Breast epithelium (tissue), 4 donors: ENCODE measurements at regions of chr2 and their contacts with region 1.

Region 1: GRCh38 chr2:10043906-10044601 is 704 bp downstream of the KLF11 start:
- DNase-seq: peak; percentile 97 to 98
- H3K4me3 ChIP-seq: peak overlapping the region; percentile 57 to 94 (median 67)
- H3K27ac ChIP-seq: peak overlapping the region; percentile 95 to 100
- H3K4me1 ChIP-seq: no peaks in the 10 kb centered on the region
- H3K27me3 ChIP-seq: no peaks in the 10 kb centered on the region
- CTCF ChIP-seq: no peak
- POLR2A ChIP-seq: peak; percentile 39

Region 2: DNA sequence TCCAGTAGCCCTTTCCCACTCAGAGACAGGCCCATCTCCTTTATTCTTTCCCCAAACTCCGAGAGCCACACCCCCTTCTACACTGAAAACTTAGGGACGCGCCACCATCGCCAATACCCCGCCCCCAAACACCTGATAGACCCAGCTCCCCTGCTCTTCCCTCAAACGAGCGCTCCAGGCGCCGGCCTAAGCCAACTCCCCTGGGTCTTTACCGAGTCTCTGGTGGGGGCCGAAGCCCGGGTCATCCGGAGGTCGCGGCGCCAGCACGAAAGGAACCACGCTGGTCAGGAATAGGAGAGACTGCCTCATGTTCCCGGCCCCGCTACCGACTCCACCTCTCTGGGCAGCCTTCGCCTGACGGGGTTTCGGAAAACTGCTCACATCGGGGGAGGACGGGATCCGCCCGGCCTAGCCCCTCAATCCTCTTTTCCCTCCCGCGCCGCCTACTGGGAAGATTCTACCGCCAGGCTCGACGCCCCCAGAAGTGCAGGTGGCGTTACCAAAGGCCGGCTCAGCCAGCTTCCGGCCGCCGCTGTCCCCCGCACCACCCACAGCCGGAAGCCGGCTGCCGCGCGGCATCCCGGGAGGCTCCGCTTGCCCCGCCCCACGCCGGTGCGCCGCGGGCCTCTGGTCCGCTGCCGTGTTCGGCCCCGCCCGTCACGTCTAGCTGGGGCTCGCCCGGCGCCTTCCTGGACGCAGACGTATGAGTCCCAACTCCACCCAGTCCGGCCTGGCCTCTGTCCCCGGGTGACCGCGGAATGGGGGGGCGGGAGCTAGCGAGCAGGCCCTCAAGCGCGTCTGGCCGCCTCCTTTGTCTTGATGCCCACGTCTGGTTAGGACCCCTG is 488.5 kb before region 1 on chr2 and contains the start of gene ADAM17:
- intact Hi-C with region 1: loop called (anchors 10 kb)
- DNase-seq: peak; percentile 95 to 96
- H3K4me3 ChIP-seq: peak within 1 kb of the TSS; percentile 74 to 98 (median 88)
- H3K27ac ChIP-seq: peak within 1 kb of the TSS; percentile 99 to 100
- H3K4me1 ChIP-seq: peaks cover 3 to 7% of the 10 kb centered on the region in 2 donors
- H3K27me3 ChIP-seq: no peaks in the 10 kb centered on the region
- CTCF ChIP-seq: peak in 2 of 3 donors; percentile 41 to 70
- POLR2A ChIP-seq: peak; percentile 79
- total RNA-seq, gene ADAM17: 32.2 to 65.9 (median 48.8) TPM

Region 3: DNA sequence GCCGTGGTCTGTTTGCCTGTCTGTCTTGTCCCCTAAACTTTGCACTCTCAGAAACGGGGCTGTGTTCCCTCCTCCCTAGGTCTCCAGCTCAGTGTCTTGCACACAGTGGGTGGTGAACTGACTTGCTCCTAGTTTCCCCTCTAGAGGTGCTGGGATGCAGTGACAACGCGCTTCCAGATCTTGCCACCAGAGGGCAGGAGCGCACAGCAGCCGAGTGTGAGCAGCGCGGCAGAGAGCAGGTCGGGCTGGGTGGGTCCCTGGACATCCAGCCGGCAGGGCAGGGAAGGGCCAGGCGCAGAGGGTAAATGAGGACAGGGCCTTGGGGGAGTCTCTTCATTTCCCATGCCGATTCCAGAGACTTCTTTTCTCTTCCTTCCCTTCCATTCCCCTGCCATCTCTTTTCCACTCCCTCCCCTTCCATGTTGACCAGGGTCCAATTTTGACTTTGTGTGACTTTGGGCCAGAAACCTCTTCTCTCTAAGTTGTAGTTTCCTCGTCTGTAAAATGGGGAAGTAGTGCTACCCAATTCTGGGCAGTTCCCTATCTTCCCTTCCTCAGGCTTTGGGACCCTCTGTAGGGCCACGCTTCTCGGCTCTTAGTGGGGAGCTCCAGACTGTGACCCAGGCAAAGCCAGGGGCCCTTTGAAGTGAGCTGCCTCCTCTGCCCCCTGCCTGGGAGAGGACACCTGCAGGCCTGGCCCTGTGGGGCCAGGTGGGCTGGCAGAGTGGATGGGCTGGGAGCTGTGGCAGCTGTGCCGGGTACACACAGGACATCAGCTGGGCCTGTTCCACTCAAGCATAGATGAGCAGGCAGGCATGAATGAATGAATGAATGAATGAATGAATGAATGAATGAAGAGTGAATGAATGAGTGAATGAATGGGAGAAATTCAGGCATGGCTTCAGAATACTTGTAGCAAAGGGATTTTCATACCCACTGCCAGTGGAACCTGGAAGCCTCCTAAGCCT is 244.1 kb before region 1 on chr2:
- intact Hi-C with region 1: loop called (anchors 10 kb)
- DNase-seq: peak; percentile 77 to 88
- H3K4me3 ChIP-seq: no peak overlapping the region
- H3K27ac ChIP-seq: peak overlapping the region; percentile 90 to 94
- H3K4me1 ChIP-seq: peaks cover 22 to 43% of the 10 kb centered on the region in 2 donors
- H3K27me3 ChIP-seq: no peaks in the 10 kb centered on the region
- CTCF ChIP-seq: peak; percentile 93 to 98 (median 95)
- POLR2A ChIP-seq: no peak

Region 4: GRCh38 chr2:9984217-9984739 is 59.8 kb before region 1 on chr2:
- intact Hi-C with region 1: loop called (anchors 5 kb)
- DNase-seq: no peak
- H3K4me3 ChIP-seq: no peak overlapping the region
- H3K27ac ChIP-seq: peak overlapping the region; percentile 2 to 45
- H3K4me1 ChIP-seq: peaks cover 0 to 6% of the 10 kb centered on the region in 2 donors
- H3K27me3 ChIP-seq: no peaks in the 10 kb centered on the region
- CTCF ChIP-seq: peak; percentile 78 to 84 (median 79)
- POLR2A ChIP-seq: no peak